OCI-LY7 (cell line): ENCODE measurements at regions of chr3 and their contacts with region 1.

Region 1: GRCh38 chr3:4449043-4449805 is 17.8 kb downstream of the SUMF1 start:
- DNase-seq: no peak
- H3K4me3 ChIP-seq: no peak overlapping the region
- H3K27ac ChIP-seq: no peak overlapping the region
- H3K4me1 ChIP-seq: no peaks in the 10 kb centered on the region
- CTCF ChIP-seq: no peak

Region 2: DNA sequence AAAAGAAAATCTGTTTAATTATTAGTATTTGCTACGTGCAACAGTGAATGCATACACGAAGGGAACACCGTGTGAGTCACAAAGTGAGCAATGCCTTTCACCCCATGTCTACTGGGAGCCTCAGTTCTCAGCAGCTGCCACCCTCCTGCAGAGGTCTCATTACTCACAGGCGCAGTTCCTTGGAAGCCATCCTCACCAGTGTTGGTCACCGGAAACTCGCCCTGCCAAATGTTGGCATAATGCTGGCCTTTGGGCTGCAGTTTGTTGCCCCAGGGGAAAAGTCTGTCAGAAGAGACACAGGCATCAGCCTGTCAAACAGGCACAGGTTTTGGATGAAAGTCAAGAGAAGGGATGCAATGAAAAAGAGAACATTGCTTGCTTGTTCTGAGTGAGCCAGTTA is 32.3 kb before region 1 on chr3:
- CTCF ChIA-PET with region 1: no interaction called
- POLR2A ChIA-PET with region 1: interaction called, 13 read pairs
- intact Hi-C with region 1: no loop called
- DNase-seq: no peak
- H3K4me3 ChIP-seq: no peak overlapping the region
- H3K27ac ChIP-seq: no peak overlapping the region
- H3K4me1 ChIP-seq: no peaks in the 10 kb centered on the region
- CTCF ChIP-seq: no peak